Left colon (tissue), 2 donors: ENCODE measurements at regions of chr1 and their contacts with region 1.

Region 1: GRCh38 chr1:51897699-51898031 is 19.1 kb upstream of the NRDC start:
- DNase-seq: no peak
- ATAC-seq: no peak

Region 2: DNA sequence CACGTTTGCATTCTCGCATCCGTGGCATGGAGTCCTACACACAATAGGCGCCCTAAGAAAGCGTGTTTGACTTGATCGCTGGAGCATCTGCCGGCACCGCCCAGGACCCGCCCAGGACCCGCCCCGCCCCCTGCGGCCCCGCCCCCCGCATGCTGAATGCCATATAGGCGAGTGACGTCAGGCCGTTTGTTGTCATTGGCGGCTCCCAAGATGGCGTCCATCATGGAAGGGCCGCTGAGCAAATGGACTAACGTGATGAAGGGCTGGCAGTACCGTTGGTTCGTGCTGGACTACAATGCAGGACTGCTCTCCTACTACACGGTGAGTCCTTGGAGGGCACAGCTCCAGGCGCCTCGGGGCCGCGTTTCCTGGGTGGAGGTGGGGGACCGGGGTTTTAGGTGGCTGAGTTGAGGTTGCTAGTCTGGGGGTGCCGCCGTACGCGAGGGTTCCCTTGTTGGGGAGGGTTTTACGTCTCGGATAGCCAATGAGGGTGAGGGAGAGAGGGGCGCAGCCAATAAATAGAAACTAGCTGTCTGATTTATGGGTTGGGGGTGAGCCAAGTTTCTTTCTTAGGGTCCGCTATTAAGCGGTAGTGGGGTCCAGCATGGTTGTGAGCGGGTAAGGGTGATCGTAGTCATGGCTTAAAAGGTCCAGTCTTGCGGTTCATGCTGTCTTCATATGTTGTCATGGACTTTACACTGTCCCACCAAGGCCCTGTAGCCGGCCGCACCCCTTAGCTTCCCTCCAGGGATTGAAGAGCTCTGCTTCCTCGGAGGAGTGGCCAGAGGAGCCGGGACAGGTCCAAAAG is 280.6 kb before region 1 on chr1 and contains the start of gene OSBPL9:
- intact Hi-C with region 1: no loop called
- DNase-seq: peak; percentile 88 to 93
- ATAC-seq: peak; percentile 96
- total RNA-seq, gene OSBPL9: 51.2 to 52.2 TPM

Region 3: DNA sequence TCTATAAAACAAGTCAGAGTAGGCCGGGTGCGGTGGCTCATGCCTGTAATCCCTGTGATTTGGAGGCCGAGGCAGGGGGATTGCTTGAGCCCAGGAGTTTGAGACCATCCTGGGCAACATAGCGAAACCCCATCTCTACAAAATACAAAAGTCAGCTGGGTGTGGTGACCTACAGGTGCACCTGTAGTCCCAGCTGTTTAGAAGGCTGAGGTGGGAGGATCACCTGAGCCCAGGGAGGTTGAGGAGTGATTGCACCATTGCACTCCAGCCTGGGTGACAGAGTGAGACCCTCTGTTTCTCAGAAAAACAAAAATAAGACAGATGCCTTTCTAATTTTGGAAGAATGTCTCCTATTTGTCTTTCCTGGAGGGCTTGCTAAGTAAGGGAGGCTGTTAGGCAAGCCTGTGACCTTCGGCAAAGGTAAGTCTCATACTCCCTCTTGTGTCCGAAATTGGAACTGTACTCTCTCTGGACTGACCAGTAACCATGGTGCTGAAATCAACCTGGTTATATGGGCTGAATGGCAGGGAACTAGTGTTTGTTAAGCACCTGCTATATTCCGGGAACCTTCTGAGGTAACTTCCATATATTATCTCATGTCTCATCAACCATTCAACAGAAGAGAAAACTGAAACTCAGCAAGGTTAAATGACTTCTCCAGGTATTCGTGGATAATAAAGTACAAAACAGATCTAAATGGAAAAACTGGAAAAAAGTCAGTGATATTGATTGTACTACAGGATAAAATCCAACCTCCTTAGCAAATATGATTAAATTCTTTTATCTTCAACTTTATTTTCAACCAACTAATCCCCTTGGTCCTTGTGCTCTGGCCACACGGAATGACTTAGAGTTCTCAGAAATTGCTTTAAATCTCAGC is 104.6 kb after region 1 on chr1:
- intact Hi-C with region 1: loop called in 1 of 2 experiments (anchors 2 kb)
- DNase-seq: peak; percentile 19 to 25
- ATAC-seq: peak; percentile 95